Activated naive CD4-positive, alpha-beta T cell treated with anti-CD3 and anti-CD28 coated beads for 36 hours (primary cell): ENCODE measurements at regions of chr16 and their contacts with region 1.

Region 1: GRCh38 chr16:28984619-28985135 is at the start of gene LAT:
- DNase-seq: peak; percentile 84
- H3K4me3 Mint-ChIP-seq: peak within 1 kb of the TSS; percentile 100
- H3K27ac Mint-ChIP-seq: peak within 1 kb of the TSS; percentile 99
- H3K4me1 Mint-ChIP-seq: peaks cover 44% of the 10 kb centered on the region
- H3K27me3 Mint-ChIP-seq: no peaks in the 10 kb centered on the region
- total RNA-seq, gene LAT: 122 to 128 TPM

Region 2: GRCh38 chr16:28910086-28911031 is 74.3 kb before region 1 on chr16:
- CTCF ChIA-PET with region 1: no interaction called
- intact Hi-C with region 1: no loop called
- DNase-seq: peak; percentile 23
- H3K4me3 Mint-ChIP-seq: no peak overlapping the region
- H3K27ac Mint-ChIP-seq: no peak overlapping the region
- H3K4me1 Mint-ChIP-seq: no peaks in the 10 kb centered on the region
- H3K27me3 Mint-ChIP-seq: no peaks in the 10 kb centered on the region

Region 3: GRCh38 chr16:28974437-28975157 is 10.1 kb before region 1 on chr16 and contains the start of gene SPNS1:
- CTCF ChIA-PET with region 1: interaction called, 14 read pairs
- intact Hi-C with region 1: loop called (anchors 1 kb)
- DNase-seq: peak; percentile 97
- H3K4me3 Mint-ChIP-seq: peak within 1 kb of the TSS; percentile 97
- H3K27ac Mint-ChIP-seq: peak within 1 kb of the TSS; percentile 91
- H3K4me1 Mint-ChIP-seq: peaks cover 34% of the 10 kb centered on the region
- H3K27me3 Mint-ChIP-seq: no peaks in the 10 kb centered on the region
- total RNA-seq, gene SPNS1: 10.3 to 10.5 TPM